ENCODE measurements at regions of chr1 and their contacts with region 1.

Region 1: DNA sequence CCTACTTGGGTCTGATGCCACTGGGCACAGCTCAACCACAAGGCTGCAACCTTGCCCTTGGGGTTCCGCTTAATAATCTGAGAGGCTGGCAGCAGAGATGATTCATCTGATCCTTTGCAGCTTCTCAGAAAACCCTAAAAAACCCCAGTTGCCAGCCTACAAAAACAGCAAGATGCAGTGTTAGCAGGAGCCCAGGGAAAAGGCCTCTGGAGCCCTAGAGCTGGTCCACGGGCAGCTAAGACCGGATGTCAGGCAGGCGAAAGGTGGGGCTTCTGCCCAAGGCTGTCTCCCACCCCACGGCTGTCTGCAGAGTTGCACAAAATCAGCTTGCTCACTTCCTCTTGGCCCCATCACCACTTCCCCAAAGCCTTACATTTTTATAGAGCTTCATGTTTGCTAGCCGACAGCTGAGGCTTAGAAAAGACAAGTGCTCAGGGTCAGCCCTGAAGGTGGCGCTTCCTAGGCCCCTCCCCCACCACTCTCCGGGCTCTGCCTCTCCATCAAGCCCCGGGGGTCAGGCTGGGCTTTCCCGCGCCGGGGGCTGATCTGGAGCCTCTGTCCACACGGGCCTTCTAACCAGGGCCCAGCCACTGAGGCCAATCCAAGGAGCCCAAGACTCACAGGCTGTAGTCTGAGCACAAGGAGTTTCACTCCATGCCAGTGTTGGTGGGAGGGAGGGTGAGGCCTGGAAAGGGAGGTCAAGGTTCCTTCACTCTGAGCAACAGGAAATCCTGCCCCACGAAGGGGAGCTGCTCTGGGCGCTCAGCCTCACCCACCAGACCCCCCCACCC is 4.2 kb upstream of the ADORA3 start:
- DNase-seq: peak; percentile 73
- CTCF ChIP-seq: no peak

Region 2: DNA sequence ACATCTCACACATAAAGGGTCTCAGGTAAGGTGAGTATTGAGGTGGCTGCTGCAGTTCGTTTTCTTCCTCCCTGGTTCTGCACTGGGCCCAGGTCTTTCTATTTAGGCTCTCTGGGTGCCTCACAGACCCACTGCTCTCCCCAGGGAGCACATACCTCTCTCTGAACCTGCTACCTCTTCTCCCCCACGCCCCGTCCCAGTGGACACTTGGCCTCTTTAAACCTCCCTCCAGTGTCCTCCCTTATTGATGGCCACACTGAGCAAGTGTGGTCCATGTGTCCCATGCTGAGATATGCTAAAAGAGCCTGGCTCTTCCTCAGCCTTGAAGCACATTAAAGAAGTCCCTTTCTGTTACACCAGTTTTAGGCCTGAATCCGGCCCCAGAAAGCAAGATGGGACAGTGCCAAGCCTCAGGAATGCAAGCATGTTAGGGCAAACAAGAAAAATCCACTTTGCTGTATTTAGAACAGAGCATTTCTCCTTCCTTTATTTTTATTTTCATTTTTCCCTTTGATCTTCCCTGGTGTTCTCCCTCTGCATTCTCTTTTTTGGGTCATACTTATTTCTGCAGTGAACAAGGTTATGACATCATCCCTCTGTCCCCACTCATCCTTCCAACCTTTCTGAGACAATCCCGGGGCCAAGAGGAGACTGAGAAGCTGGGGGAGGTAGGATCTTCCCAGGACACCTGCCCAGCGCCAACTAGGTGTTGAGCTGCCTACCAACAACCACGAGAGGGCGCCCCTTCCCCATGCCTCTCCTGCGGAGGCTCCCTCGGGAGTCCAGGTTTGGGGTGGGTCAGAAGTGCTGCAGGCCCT is 285.1 kb before region 1 on chr1:
- CTCF ChIA-PET with region 1: interaction called, 10 read pairs
- POLR2A ChIA-PET with region 1: no interaction called
- DNase-seq: peak; percentile 68
- CTCF ChIP-seq: peak; percentile 82

Region 3: GRCh38 chr1:111392460-111392945 is 115.1 kb before region 1 on chr1:
- CTCF ChIA-PET with region 1: no interaction called
- POLR2A ChIA-PET with region 1: no interaction called
- DNase-seq: no peak
- CTCF ChIP-seq: no peak

Region 4: DNA sequence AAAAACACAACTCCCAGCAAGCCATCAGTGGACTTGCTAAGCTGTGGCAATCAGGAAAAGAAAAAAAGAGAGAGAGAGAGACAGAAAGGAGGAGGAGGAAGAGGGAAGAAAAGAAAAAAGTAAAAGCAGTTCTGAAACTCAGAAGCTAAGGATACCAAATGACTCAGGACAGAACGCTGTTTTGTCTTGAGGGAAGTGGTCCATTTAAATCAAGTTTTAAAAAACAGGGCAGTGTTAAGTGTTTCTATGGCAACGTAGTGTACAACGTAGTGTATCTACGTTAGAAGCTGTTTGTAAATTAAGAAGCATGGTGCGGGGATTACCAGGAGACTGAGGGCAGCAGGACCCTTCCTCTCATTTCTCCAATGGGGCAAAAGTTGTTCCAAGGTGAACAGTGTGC is 10.0 kb before region 1 on chr1:
- CTCF ChIA-PET with region 1: interaction called, 84 read pairs
- POLR2A ChIA-PET with region 1: no interaction called
- DNase-seq: no peak
- CTCF ChIP-seq: no peak

Region 5: DNA sequence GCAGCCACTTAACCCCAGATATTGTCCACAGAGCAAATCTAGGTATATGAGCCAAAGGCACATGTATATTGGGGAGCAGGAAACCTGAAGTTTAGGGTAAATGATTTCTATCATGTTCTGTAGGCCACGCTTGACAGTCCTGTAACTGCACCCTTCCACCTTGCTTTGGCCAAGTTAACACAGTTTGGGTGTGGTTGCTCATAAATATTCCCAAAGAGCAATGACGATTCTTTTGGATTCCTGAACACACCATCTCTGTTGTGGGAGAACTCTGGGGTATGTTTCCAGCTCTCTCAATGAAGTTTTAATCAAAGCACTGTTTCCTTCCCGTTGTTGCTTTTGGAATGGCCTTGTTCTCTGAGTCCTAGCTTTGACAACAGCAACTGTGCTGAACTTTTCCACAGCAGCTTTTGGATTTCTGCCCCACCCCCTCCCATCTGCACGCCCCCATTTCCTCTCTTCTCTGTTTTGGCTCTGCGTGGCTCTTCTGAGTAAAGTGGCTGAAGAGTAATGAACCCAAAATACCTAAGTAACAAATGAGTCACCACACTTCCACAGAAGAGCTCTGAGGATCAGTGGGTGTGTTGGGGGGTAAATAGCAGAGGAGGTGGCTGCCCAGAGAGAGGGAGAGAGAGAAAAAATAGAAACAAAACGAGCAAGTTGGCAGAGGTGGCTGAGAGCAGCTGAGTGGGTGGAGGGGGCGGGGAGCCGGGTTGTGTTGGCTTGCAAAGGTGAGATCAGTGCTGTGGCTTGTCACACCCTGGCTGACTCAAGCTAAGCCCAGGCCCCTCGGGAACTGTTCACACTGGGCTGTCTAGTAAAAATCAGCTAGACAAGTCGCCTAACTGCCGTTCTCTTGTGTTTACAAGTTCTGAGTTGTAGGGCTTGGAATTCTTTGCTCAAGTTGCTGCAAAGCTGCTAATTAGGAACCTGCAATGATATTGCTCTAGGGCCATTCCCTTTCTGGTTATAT is 85.1 kb after region 1 on chr1:
- CTCF ChIA-PET with region 1: interaction called, 94 read pairs
- POLR2A ChIA-PET with region 1: no interaction called
- DNase-seq: peak; percentile 71
- CTCF ChIP-seq: no peak

Region 6: GRCh38 chr1:111648806-111649205 is 141.2 kb after region 1 on chr1:
- CTCF ChIA-PET with region 1: interaction called, 44 read pairs
- POLR2A ChIA-PET with region 1: no interaction called
- DNase-seq: no peak
- CTCF ChIP-seq: no peak

Region 7: GRCh38 chr1:111696330-111696729 is 188.7 kb after region 1 on chr1:
- CTCF ChIA-PET with region 1: interaction called, 56 read pairs
- POLR2A ChIA-PET with region 1: no interaction called
- DNase-seq: no peak
- CTCF ChIP-seq: no peak

Region 8: GRCh38 chr1:111747282-111747734 is 239.7 kb after region 1 on chr1:
- CTCF ChIA-PET with region 1: interaction called, 53 read pairs
- POLR2A ChIA-PET with region 1: no interaction called
- DNase-seq: peak; percentile 73
- CTCF ChIP-seq: peak; percentile 76

Measured in GM10248 (cell line).